Heart right ventricle (tissue), 16 donors: ENCODE measurements at regions of chr11 and their contacts with region 1.

Region 1: GRCh38 chr11:128643661-128644317 is 50.1 kb upstream of the FLI1 start:
- DNase-seq: no peak
- ATAC-seq: no peak
- H3K4me3 ChIP-seq: no peak overlapping the region
- H3K27ac ChIP-seq: no peak overlapping the region
- H3K4me1 ChIP-seq: peaks cover 0 to 15% (median 0%) of the 10 kb centered on the region in 9 donors
- H3K27me3 ChIP-seq: no peaks in the 10 kb centered on the region
- CTCF ChIP-seq: no peak

Region 2: GRCh38 chr11:128684549-128685401 is 41.0 kb after region 1 on chr11:
- intact Hi-C with region 1: loop called in 1 of 10 experiments (anchors 5 kb)
- DNase-seq: no peak
- ATAC-seq: no peak
- H3K4me3 ChIP-seq: peak overlapping the region in 5 of 10 donors; percentile 2 to 31 (median 20)
- H3K27ac ChIP-seq: no peak overlapping the region
- H3K4me1 ChIP-seq: peaks cover 4 to 46% (median 36%) of the 10 kb centered on the region in 9 donors
- H3K27me3 ChIP-seq: peaks cover 16 to 60% (median 49%) of the 10 kb centered on the region in 7 donors
- CTCF ChIP-seq: no peak

Region 3: GRCh38 chr11:128695539-128696221 is 51.9 kb after region 1 on chr11:
- intact Hi-C with region 1: no loop called
- DNase-seq: no peak
- ATAC-seq: peak in 4 of 8 donors; percentile 6 to 46 (median 40)
- H3K4me3 ChIP-seq: peak overlapping the region; percentile 72 to 92 (median 87)
- H3K27ac ChIP-seq: peak overlapping the region; percentile 86 to 99 (median 95)
- H3K4me1 ChIP-seq: peaks cover 2 to 83% (median 30%) of the 10 kb centered on the region in 9 donors
- H3K27me3 ChIP-seq: peaks cover 0 to 15% (median 3%) of the 10 kb centered on the region in 7 donors
- CTCF ChIP-seq: no peak

Region 4: GRCh38 chr11:128709402-128709801 is 65.6 kb after region 1 on chr11:
- intact Hi-C with region 1: no loop called
- DNase-seq: peak in 1 of 2 donors; percentile 85
- ATAC-seq: peak; percentile 77 to 88 (median 79)
- H3K4me3 ChIP-seq: no peak overlapping the region
- H3K27ac ChIP-seq: peak overlapping the region in 9 of 10 donors; percentile 45 to 87 (median 63)
- H3K4me1 ChIP-seq: peaks cover 4 to 100% (median 72%) of the 10 kb centered on the region in 9 donors
- H3K27me3 ChIP-seq: no peaks in the 10 kb centered on the region
- CTCF ChIP-seq: peak in 2 of 9 donors; percentile 19 to 22

Region 5: DNA sequence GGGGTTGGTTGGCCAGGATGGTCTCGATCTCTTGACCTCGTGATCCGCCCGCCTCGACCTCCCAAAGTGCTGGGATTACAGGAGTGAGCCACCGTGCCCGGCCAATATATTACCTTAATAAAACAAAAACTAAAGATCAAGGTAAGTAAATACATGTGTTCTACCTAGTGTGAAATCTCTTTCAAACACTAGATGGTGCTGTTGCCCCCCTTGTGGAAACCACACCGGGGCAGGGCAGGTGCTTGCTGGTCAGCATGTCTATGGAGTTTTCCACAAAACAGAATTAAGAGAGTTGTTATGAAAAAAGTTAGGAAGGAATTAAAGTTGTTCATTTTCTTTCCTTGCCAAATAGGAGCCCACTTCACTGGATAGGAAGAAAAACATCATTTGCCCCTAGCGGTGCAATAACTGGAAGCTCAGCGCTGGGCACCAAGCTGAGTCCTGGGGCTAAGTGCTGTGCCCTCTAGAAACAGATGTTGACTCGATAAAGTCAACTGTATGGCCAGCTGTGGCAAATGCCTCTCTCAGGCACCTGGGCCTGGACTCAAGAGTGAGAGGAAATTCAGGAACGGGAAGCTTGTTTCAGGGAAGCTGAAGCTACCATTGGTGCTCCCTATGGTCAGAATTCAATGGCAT is 241.0 kb after region 1 on chr11:
- intact Hi-C with region 1: no loop called
- DNase-seq: peak in 1 of 2 donors; percentile 61
- ATAC-seq: peak; percentile 71 to 90 (median 82)
- H3K4me3 ChIP-seq: no peak overlapping the region
- H3K27ac ChIP-seq: no peak overlapping the region
- H3K4me1 ChIP-seq: peaks cover 0 to 2% (median 0%) of the 10 kb centered on the region in 9 donors
- H3K27me3 ChIP-seq: peaks cover 0 to 44% (median 21%) of the 10 kb centered on the region in 7 donors
- CTCF ChIP-seq: peak; percentile 80 to 94 (median 87)